A549 (cell line): ENCODE measurements at regions of chr14 and their contacts with region 1.

Region 1: DNA sequence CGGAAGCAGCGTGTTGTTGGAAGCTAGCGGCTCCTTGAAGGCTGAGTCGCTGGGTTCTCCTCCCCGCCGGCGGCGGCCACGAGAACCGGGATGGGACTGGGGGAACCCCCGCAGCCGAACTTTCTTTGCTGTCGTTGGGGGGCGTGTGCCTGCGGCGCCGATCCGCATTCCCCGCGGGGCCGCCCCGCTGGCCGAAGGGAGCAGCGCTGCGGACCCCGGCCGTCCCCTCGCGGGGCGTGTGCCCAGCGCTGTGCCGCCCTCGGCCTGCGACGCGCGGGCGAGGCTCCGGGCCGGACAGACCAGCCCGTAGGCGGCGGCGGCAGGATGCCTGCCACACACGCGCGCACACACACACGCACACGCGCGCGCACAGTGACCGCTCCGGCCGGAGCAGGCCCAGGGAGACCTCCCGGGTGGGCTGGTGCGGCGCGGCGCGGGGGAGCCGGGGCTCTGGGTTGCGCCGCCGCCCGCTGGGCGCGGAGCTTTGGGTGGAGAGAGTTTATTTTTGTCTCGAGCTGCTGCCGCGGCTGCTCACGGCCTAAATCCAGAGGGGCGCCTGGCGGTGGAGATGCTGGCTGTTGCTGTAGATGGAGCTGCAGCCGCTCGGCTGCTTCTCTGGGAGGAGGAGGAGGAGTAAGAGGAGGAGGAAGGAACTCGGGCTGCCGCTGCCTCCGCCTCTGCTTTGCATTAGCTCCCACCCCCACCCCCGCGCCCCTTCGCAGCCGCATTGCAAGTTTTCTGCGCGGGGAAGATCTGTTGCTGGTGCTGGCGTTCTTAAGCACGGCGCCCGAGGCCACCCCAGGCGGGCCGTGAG is at the start of gene SAMD4A:
- DNase-seq: peak; percentile 68 to 88
- ATAC-seq: peak; percentile 60 to 71
- H3K4me3 ChIP-seq: peak within 1 kb of the TSS; percentile 75
- H3K27ac ChIP-seq: peak within 1 kb of the TSS; percentile 88 to 98
- H3K4me1 ChIP-seq: peaks cover 35% of the 10 kb centered on the region
- CTCF ChIP-seq: peak; percentile 33
- EP300 ChIP-seq: no peak
- POLR2A ChIP-seq: peak; percentile 21; the same call in 1 of the 2 replicates
- RAD21 ChIP-seq: peak; percentile 52 to 60
- polyA plus RNA-seq, gene SAMD4A: 3.9 and 5.3 TPM in 2 replicates

Region 2: DNA sequence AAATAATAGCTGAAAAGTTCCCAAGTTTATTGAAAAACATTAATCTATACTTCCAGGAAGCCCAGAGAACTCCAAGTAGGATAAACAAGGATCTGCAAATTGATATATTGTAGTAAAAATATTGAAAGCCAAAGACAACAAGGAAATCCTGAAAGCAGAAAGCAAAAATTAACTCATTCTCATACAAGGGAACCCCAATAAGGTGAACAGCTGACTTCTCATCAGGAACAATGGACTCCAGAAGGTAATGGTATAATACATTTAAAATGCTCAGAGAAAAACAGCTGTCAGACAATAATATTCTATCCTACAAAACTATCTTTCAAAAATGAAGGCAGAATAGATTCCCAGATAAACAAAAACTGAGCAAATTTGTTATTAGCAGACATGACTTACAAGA is 471.9 kb before region 1 on chr14:
- CTCF ChIA-PET with region 1: no interaction called
- POLR2A ChIA-PET with region 1: no interaction called
- DNase-seq: no peak
- ATAC-seq: no peak
- H3K4me3 ChIP-seq: no peak overlapping the region
- H3K27ac ChIP-seq: no peak overlapping the region
- H3K4me1 ChIP-seq: no peaks in the 10 kb centered on the region
- CTCF ChIP-seq: no peak
- EP300 ChIP-seq: no peak
- POLR2A ChIP-seq: no peak
- RAD21 ChIP-seq: no peak

Region 3: GRCh38 chr14:54498095-54498531 is 68.5 kb before region 1 on chr14:
- CTCF ChIA-PET with region 1: no interaction called
- POLR2A ChIA-PET with region 1: no interaction called
- DNase-seq: no peak
- ATAC-seq: no peak
- H3K4me3 ChIP-seq: no peak overlapping the region
- H3K27ac ChIP-seq: no peak overlapping the region
- H3K4me1 ChIP-seq: peaks cover 4% of the 10 kb centered on the region; the same call in 1 of the 3 replicates
- CTCF ChIP-seq: no peak
- EP300 ChIP-seq: 0 out of 5 replicates have a peak, but pooled peaks of 1 of the 2 experiments have one; percentile 8
- POLR2A ChIP-seq: no peak
- RAD21 ChIP-seq: no peak

Region 4: DNA sequence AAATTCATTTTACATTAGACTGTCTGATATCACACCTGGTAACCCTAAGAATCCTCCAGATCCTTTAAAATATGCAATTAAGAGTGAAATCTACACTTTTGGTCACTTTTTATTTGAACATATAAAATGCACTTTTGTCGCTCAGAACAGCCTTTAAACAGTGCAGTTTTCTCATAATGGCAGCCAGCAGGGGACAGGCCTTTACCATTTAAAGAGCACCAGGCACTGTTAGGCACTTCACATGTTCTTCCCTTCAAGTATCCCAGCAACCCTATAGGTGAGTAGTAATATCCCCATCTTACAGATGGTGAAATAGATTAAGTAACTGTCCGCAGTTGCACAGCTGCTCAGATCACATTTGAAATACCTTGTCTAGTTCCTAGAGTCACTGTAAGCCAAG is 11.0 kb before region 1 on chr14:
- CTCF ChIA-PET with region 1: interaction called, 25 read pairs
- POLR2A ChIA-PET with region 1: no interaction called
- DNase-seq: peak; percentile 10 to 20
- ATAC-seq: peak; percentile 68 to 78; a peak in 4 of 6 replicates
- H3K4me3 ChIP-seq: no peak overlapping the region
- H3K27ac ChIP-seq: no peak overlapping the region
- H3K4me1 ChIP-seq: no peaks in the 10 kb centered on the region
- CTCF ChIP-seq: peak; percentile 22; the same call in 1 of the 3 replicates
- EP300 ChIP-seq: no peak
- POLR2A ChIP-seq: no peak
- RAD21 ChIP-seq: peak; percentile 29 to 44; a peak in 2 of 5 replicates

Region 5: DNA sequence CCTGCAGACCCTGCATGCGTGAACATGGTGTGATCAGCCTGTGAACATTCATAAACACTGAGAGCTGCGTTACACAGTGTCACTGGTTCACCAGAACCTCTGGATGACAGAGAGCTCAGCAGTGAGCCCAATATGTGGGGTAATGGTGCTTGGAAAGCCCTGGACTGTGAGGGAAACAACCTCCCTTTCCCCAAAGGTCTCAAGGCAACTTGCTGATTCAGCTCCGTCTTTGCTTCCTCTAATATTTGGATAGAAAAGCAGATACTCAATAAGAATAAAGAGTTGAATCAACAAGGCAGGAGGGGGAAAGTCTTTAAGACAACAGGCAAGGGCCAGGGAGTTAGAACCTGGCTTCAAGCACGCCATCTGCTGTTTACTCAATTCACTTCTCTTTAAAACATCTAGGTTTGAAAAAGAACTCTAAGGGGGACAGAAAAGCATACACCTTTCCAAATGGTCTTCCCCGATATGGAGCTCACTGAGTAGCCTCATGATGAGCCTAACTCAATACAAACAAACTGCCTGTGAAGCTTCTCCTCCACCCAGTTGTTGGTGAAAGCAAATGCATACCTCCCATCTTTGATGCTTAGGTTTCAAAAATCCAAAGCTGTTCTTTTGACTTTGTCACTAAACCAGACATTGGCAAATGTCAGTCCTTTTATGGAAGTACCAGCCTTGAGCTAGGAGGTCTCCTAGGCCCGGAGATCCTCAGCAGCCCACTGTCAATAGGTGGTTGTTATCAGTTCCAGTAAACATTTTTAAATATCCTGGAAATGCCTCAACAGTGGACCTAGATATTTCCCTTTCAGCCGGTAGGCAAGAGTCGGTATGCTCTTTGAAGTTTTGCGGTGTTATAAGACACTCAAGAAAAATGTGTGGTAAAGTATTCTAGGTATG is 76.4 kb after region 1 on chr14:
- CTCF ChIA-PET with region 1: interaction called, 31 read pairs
- POLR2A ChIA-PET with region 1: interaction called, 3 read pairs
- DNase-seq: peak in 1 of 2 experiments; percentile 29
- ATAC-seq: peak in 1 of 2 experiments; percentile 66; a peak in 3 of 6 replicates
- H3K4me3 ChIP-seq: no peak overlapping the region
- H3K27ac ChIP-seq: 0 out of 6 replicates have a peak overlapping the region, but pooled peaks of 1 of the 2 experiments have one; percentile 2
- H3K4me1 ChIP-seq: peaks cover 10% of the 10 kb centered on the region
- CTCF ChIP-seq: peak; percentile 51
- EP300 ChIP-seq: no peak
- POLR2A ChIP-seq: no peak
- RAD21 ChIP-seq: peak; percentile 46 to 54

Region 6: GRCh38 chr14:54669721-54670561 is 103.3 kb after region 1 on chr14:
- CTCF ChIA-PET with region 1: interaction called, 14 read pairs
- POLR2A ChIA-PET with region 1: no interaction called
- DNase-seq: no peak
- ATAC-seq: peak in 1 of 2 experiments; percentile 51; a peak in 3 of 6 replicates
- H3K4me3 ChIP-seq: no peak overlapping the region
- H3K27ac ChIP-seq: peak overlapping the region; percentile 45 to 52; a peak in 3 of 6 replicates
- H3K4me1 ChIP-seq: peaks cover 30% of the 10 kb centered on the region
- CTCF ChIP-seq: no peak
- EP300 ChIP-seq: no peak
- POLR2A ChIP-seq: no peak
- RAD21 ChIP-seq: no peak

Region 7: DNA sequence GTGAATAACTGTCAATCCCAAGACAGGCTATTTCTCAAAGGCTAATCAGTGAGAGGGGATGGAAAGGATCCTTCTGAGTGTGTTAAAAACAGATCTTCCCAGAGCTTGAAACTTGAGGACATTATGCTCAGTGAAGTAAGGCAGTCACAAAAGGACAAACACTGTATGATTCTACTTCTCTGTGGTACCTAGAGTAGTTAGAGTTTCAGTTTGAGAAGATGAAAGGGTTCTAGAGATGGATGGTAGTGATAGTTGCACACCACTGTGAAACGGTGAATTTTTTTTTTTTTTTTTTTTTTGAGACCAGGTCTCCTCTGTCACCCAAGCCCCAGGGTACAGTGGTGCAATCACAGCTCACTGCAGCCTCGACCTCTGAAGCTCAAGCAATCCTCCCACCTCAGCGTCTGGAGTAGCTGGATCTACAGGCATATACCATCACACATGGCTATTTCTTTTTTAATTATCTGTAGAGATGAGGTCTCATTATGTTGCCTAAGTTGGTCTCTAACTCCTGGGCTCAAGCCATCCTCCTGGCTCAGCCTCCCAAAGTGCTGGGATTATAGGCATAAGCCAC is 134.2 kb after region 1 on chr14:
- CTCF ChIA-PET with region 1: interaction called, 150 read pairs
- POLR2A ChIA-PET with region 1: no interaction called
- DNase-seq: no peak
- ATAC-seq: no peak
- H3K4me3 ChIP-seq: no peak overlapping the region
- H3K27ac ChIP-seq: no peak overlapping the region
- H3K4me1 ChIP-seq: peaks cover 10% of the 10 kb centered on the region; the same call in 2 of the 3 replicates
- CTCF ChIP-seq: no peak
- EP300 ChIP-seq: no peak
- POLR2A ChIP-seq: no peak
- RAD21 ChIP-seq: no peak

Region 8: DNA sequence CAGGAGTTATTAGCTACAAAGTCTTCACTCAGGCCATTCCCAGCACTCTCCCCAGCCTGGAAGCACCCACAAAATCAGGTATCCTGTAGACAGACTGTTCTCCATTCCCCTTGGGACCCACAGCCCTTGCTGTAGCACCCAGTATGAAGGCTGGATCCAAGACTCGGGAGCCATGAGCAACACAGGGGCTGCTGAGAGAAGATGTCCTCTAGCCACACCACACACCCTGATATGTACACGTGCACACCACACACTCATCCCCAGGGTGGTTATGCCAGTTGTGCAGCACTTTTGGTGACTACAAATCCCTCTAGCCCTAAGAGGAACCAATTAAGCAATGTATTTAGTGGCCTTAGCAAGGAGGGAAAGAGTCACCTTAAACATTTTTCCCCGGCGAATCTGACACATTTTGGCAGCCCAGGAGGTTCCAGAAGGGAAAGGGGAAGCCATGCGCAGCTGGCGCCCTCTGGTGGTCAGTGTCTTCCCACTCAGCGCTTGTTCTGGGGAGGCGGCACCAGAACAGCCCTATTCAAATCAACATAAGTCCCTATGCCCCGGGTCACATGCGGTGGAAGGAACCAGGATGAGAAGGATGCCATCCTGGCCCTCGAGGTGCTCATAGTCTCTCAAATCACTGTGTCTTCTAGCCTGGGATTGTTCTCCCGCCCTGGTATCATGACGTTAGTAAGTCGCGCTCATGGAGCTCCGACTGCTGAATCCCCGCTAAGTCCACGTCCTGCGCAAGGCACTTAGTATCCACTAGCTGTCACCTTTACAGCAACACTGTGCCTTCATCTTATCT is 239.1 kb after region 1 on chr14:
- CTCF ChIA-PET with region 1: interaction called, 100 read pairs
- POLR2A ChIA-PET with region 1: no interaction called
- DNase-seq: peak; percentile 82 to 86
- ATAC-seq: peak; percentile 90 to 96
- H3K4me3 ChIP-seq: no peak overlapping the region
- H3K27ac ChIP-seq: no peak overlapping the region
- H3K4me1 ChIP-seq: 0 out of 3 replicates have a peak, but pooled peaks cover 3% of the 10 kb centered on the region
- CTCF ChIP-seq: peak; percentile 95
- EP300 ChIP-seq: no peak
- POLR2A ChIP-seq: no peak
- RAD21 ChIP-seq: peak; percentile 88 to 90